ENCODE measurements at regions of chr4 and their contacts with region 1.

Region 1: GRCh38 chr4:153785910-153786721 is 2.8 kb downstream of the SFRP2 start:
- DNase-seq: no peak
- ATAC-seq: no peak
- H3K4me3 ChIP-seq: no peak overlapping the region
- H3K27ac ChIP-seq: no peak overlapping the region
- H3K4me1 ChIP-seq: no peaks in the 10 kb centered on the region
- H3K27me3 ChIP-seq: no peaks in the 10 kb centered on the region

Region 2: GRCh38 chr4:153634738-153635353 is 151.3 kb before region 1 on chr4:
- intact Hi-C with region 1: no loop called
- DNase-seq: no peak
- ATAC-seq: peak in 1 of 2 donors; percentile 44
- H3K4me3 ChIP-seq: no peak overlapping the region
- H3K27ac ChIP-seq: no peak overlapping the region
- H3K4me1 ChIP-seq: no peaks in the 10 kb centered on the region
- H3K27me3 ChIP-seq: no peaks in the 10 kb centered on the region

Region 3: DNA sequence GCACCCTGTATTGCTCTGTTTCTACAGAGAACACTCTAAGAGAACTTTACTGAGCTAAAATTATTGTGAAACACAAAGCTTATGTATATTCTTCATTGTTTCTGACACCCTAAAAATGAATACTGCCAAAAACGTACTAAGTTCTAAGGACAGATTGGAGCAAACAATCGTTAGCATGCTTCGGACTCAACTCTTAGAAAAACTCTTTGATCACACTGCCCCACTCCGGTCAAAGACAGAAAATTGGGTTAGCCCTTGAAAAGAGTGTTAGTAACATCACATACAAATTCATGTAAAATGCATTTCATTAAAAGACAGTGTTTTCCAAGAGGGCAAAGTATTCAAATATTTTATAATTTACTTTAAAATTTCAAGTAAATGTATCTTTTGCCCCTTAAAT is 528.1 kb after region 1 on chr4:
- intact Hi-C with region 1: loop called in 2 of 4 experiments (anchors 10 kb)
- DNase-seq: no peak
- ATAC-seq: no peak
- H3K4me3 ChIP-seq: no peak overlapping the region
- H3K27ac ChIP-seq: no peak overlapping the region
- H3K4me1 ChIP-seq: no peaks in the 10 kb centered on the region
- H3K27me3 ChIP-seq: no peaks in the 10 kb centered on the region

Measured in right cardiac atrium (tissue), 5 donors.